ENCODE measurements at regions of chr12 and their contacts with region 1.

Region 1: GRCh38 chr12:24798335-24798734 is 150.6 kb downstream of the BCAT1 start:
- DNase-seq: peak; percentile 73
- ATAC-seq: peak; percentile 91
- H3K4me3 ChIP-seq: no peak overlapping the region
- H3K27ac ChIP-seq: no peak overlapping the region
- H3K4me1 ChIP-seq: peaks cover 11% of the 10 kb centered on the region
- H3K27me3 ChIP-seq: no peaks in the 10 kb centered on the region
- CTCF ChIP-seq: no peak
- EP300 ChIP-seq: no peak
- POLR2A ChIP-seq: no peak
- RAD21 ChIP-seq: no peak

Region 2: DNA sequence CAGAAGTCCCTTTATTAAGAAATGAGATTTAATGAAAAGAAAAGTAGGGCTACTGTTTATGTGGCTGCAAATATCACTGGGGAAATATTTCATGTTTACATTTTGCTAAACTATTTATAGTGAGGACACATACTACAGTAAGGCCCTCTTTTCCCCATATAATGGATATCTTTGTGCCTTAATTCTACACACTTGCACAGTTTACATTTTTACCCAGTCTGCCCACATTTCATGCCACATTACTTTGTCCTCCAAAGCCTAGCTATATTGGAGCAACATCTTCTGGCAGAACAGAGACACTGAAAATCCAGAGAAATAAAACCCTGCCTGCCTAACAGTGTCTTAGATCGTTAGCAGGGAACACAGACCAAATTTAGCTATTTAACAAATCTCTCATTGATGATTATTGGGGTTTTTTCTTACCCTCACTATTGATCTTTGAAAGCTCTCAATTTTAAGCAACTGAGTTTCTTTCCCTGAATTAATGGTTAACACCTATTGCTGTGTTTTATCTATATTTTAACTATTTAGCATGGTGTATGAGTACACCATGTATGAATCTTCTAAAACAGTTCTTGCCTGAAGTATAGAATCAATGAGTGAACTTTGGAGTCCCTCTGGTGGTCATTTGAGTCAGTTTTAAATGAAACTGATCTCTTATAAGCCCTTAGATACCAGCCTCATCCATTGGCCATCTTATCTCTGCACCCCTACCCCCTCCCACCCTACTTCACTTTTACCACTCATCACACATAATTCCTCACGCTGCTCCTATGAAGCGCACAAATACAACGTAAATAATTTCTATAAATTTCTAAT is 19.6 kb before region 1 on chr12:
- CTCF ChIA-PET with region 1: interaction called, 13 read pairs
- POLR2A ChIA-PET with region 1: interaction called, 7 read pairs
- RAD21 ChIA-PET with region 1: interaction called, 4 read pairs
- SMC1A ChIA-PET with region 1: no interaction called
- in situ Hi-C with region 1: no loop called
- intact Hi-C with region 1: no loop called
- DNase-seq: peak; percentile 8
- ATAC-seq: peak; percentile 90
- H3K4me3 ChIP-seq: no peak overlapping the region
- H3K27ac ChIP-seq: no peak overlapping the region
- H3K4me1 ChIP-seq: no peaks in the 10 kb centered on the region
- H3K27me3 ChIP-seq: no peaks in the 10 kb centered on the region
- CTCF ChIP-seq: peak; percentile 37 to 67 (median 43); a peak in 4 of 6 replicates
- EP300 ChIP-seq: no peak
- POLR2A ChIP-seq: no peak
- RAD21 ChIP-seq: peak; percentile 87

Region 3: DNA sequence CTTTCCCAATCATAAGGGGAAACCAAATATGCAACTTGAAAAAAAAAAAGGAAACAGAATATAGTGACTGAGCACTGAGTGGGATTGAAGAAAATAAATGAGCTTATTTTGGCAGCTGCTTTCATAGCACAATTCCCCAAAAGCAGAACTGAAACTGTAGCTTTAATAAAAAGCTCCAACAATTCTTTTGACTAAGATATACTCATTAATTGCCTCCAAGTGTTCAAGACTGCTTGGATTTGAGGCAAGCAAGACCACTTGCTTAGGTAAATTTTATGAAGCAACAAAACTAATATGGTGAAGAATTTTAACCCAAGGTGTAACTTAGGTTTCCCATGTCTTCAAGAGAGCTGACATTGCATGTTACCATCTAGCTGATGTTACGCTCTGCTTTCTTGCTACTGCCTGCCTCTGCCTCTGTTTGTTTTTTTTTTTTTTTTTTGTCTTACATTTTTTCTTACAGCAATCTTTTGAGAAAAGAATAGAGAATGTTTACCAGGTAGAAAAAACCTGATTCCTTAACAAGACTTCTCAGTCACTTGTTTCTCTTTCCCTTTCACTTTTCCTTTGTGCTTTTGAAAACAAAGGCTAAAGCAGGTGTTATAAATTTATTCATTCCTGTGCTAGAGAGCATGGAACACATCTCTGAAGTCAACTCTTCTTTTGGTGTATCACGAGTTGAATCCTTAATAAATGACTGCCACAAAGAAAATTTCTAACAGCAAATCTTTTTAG is 16.2 kb after region 1 on chr12:
- CTCF ChIA-PET with region 1: interaction called, 14 read pairs
- POLR2A ChIA-PET with region 1: interaction called, 8 read pairs
- RAD21 ChIA-PET with region 1: interaction called, 5 read pairs
- SMC1A ChIA-PET with region 1: interaction called, 18 read pairs
- in situ Hi-C with region 1: no loop called
- intact Hi-C with region 1: loop called (anchors 2 kb)
- DNase-seq: peak; percentile 63
- ATAC-seq: peak; percentile 94
- H3K4me3 ChIP-seq: peak overlapping the region; percentile 46; the same call in 1 of the 2 replicates
- H3K27ac ChIP-seq: peak overlapping the region; percentile 63
- H3K4me1 ChIP-seq: peaks cover 17% of the 10 kb centered on the region
- H3K27me3 ChIP-seq: no peaks in the 10 kb centered on the region
- CTCF ChIP-seq: no peak
- EP300 ChIP-seq: peak; percentile 74 to 91; a peak in 3 of 4 replicates
- POLR2A ChIP-seq: no peak
- RAD21 ChIP-seq: no peak

Region 4: DNA sequence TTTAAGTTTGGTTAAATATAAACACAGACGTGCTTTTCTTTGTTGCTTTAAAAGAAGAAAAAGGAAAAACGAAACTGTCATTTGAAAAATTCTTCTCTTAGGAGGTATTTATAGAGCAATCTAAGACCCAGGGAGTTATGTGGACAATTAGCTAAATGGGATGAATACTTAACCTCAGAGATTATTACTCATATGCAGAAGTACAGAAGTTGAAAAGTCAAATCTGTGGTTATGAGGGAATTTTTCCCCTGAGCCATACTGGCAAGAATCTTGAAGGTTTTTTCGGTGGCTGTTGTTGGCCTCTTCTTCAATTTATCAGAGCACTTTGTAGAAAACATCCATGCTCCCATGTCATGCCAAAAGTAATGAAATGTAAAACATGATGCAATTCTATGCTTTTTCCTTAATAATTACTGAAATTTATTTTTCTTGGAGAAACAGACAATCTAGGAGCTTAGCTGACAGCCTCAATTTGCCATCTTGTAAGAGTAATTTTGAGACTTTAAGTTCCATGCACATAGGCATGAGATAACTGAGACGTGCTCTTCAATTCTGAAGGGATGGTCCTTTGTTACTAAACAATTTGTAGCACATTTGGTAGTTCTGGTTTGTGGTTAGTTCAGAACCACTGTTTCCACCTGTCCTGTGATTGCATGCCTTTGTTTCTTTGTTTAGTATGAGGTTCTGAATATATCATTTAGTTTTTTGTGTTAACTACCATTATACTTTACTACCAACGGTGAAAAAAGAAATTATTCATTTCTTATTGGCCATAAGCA is 24.0 kb after region 1 on chr12:
- CTCF ChIA-PET with region 1: interaction called, 4 read pairs
- POLR2A ChIA-PET with region 1: no interaction called
- RAD21 ChIA-PET with region 1: no interaction called
- SMC1A ChIA-PET with region 1: interaction called, 7 read pairs
- in situ Hi-C with region 1: no loop called
- intact Hi-C with region 1: loop called (anchors 2 kb)
- DNase-seq: peak; percentile 66
- ATAC-seq: peak; percentile 85
- H3K4me3 ChIP-seq: peak overlapping the region; percentile 13; the same call in 1 of the 2 replicates
- H3K27ac ChIP-seq: peak overlapping the region; percentile 54
- H3K4me1 ChIP-seq: peaks cover 31% of the 10 kb centered on the region
- H3K27me3 ChIP-seq: no peaks in the 10 kb centered on the region
- CTCF ChIP-seq: no peak
- EP300 ChIP-seq: peak; percentile 76 to 84; a peak in 3 of 4 replicates
- POLR2A ChIP-seq: no peak
- RAD21 ChIP-seq: no peak